SK-N-SH (cell line): ENCODE measurements at regions of chr17 and their contacts with region 1.

Region 1: GRCh38 chr17:79126139-79126538 is 51.5 kb downstream of the ENGASE start:
- DNase-seq: peak; percentile 87
- H3K4me3 ChIP-seq: no peak overlapping the region
- H3K27ac ChIP-seq: no peak overlapping the region
- H3K4me1 ChIP-seq: peaks cover 0 to 17% of the 10 kb centered on the region in 2 experiments; a peak in 1 of 4 replicates
- H3K27me3 ChIP-seq: peaks cover 68% of the 10 kb centered on the region
- CTCF ChIP-seq: peak; percentile 31
- EP300 ChIP-seq: no peak
- RAD21 ChIP-seq: peak; percentile 65

Region 2: DNA sequence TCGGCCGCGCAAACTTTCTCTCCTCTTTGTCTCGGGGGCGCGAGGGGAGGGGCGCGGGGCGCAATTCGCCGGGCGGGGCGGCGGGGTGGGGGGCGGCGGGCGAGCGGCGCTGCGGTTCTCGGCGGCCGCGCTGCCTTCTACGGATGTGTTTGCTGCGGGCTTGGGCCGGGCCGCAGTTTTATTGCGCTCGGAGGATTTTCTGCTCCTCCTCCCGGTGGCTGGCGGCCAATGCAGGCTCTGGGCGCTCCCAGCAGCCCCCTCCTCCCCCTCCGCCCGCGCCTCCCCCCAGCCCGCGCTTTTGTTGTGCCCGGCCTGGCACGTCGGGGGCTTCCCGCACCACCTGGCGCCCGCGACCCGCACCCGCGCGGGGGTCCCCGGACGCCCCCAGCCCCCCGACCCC is 200.9 kb before region 1 on chr17 and contains the start of gene TIMP2:
- CTCF ChIA-PET with region 1: no interaction called
- POLR2A ChIA-PET with region 1: no interaction called
- DNase-seq: peak; percentile 100
- H3K4me3 ChIP-seq: peak within 1 kb of the TSS; percentile 74 to 84
- H3K27ac ChIP-seq: peak within 1 kb of the TSS; percentile 74 to 93
- H3K4me1 ChIP-seq: peaks cover 18 to 46% of the 10 kb centered on the region in 2 experiments
- H3K27me3 ChIP-seq: no peaks in the 10 kb centered on the region
- CTCF ChIP-seq: no peak
- EP300 ChIP-seq: no peak
- RAD21 ChIP-seq: peak; percentile 14; the same call in 1 of the 2 replicates
- polyA plus RNA-seq, gene TIMP2: 256 and 441 TPM in 2 replicates

Region 3: GRCh38 chr17:79065105-79065670 is 61.0 kb before region 1 on chr17:
- CTCF ChIA-PET with region 1: no interaction called
- POLR2A ChIA-PET with region 1: no interaction called
- DNase-seq: no peak
- H3K4me3 ChIP-seq: no peak overlapping the region
- H3K27ac ChIP-seq: no peak overlapping the region
- H3K4me1 ChIP-seq: no peaks in the 10 kb centered on the region
- H3K27me3 ChIP-seq: no peaks in the 10 kb centered on the region; the same call in 1 of the 2 replicates
- CTCF ChIP-seq: peak; percentile 68
- EP300 ChIP-seq: no peak
- RAD21 ChIP-seq: peak; percentile 65

Region 4: DNA sequence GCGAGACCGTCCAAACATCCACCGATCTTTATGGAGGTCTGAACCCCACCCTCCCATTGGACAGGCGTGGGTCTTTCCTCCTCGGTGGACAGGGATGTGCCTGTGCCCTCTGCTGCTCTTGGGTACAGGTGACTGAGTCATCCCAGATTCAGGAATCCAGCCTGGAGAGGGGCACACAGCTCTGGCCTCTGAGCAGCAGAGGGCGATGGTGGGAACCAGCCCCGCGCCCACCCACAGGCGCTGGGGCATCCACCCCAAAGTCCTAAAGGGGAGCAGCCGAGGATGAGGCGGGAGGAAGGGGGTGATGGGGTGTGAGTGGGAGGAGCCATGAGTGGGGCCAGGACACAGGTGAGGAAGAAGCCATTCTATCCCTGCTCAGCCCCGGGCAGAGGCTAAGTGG is 16.6 kb before region 1 on chr17:
- CTCF ChIA-PET with region 1: interaction called, 42 read pairs
- POLR2A ChIA-PET with region 1: interaction called, 5 read pairs
- DNase-seq: peak; percentile 79
- H3K4me3 ChIP-seq: no peak overlapping the region
- H3K27ac ChIP-seq: no peak overlapping the region
- H3K4me1 ChIP-seq: peaks cover 0 to 15% of the 10 kb centered on the region in 2 experiments; a peak in 1 of 4 replicates
- H3K27me3 ChIP-seq: peaks cover 17% of the 10 kb centered on the region; the same call in 1 of the 2 replicates
- CTCF ChIP-seq: peak; percentile 48
- EP300 ChIP-seq: no peak
- RAD21 ChIP-seq: peak; percentile 51

Region 5: DNA sequence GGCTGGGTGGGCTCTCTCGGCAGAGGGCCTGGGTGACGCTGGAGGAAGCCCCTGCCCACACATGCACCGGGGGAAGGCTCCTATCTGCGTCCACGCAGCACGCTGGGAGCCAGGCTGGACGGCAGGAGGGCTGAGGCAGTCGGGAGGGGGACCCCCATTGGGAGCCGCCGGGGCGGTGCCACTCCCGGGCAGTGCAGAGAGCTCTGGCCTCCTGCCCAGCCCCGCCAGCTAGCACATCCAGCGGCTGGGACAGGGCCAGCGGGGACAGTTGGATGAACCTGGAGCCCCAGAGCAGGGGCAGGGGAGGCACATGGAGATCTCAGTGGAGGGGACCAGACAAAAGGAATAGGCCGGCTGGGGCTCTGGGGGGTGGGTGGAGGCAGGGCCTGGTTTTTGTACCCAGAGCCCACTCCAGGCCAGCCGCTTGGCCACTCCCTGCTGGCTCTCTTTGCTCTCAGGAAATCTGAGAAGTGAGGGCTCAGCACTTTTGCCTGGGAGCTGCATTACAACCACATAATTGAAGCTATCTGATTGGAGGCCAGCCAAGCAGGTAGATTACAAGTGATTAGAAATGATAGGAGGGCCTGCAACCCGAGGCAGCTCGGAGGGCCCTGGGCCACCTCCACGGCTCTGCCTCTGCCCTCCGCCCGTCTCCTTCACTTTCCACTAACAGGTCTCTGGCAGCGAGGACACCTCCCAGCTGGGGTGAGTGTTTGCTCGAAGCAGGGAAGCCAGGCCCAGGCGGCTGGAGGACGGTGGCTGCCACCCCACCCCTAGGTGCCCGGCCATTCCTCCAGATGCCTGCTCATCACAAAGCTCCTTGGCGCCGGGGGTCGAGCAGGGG is 11.5 kb before region 1 on chr17:
- CTCF ChIA-PET with region 1: interaction called, 42 read pairs
- POLR2A ChIA-PET with region 1: interaction called, 5 read pairs
- DNase-seq: peak; percentile 97
- H3K4me3 ChIP-seq: no peak overlapping the region; a peak in 1 of 4 replicates
- H3K27ac ChIP-seq: peak overlapping the region in 1 of 2 experiments; percentile 40; a peak in 1 of 4 replicates
- H3K4me1 ChIP-seq: peaks cover 0 to 27% of the 10 kb centered on the region in 2 experiments; a peak in 1 of 4 replicates
- H3K27me3 ChIP-seq: peaks cover 35% of the 10 kb centered on the region
- CTCF ChIP-seq: no peak
- EP300 ChIP-seq: peak in 1 of 2 experiments; percentile 59; a peak in 2 of 4 replicates
- RAD21 ChIP-seq: no peak; the same call in 1 of the 2 replicates

Region 6: GRCh38 chr17:79137015-79137788 is 11.1 kb after region 1 on chr17:
- CTCF ChIA-PET with region 1: interaction called, 10 read pairs
- POLR2A ChIA-PET with region 1: no interaction called
- DNase-seq: no peak
- H3K4me3 ChIP-seq: no peak overlapping the region
- H3K27ac ChIP-seq: no peak overlapping the region
- H3K4me1 ChIP-seq: peaks cover 0 to 23% of the 10 kb centered on the region in 2 experiments; a peak in 1 of 4 replicates
- H3K27me3 ChIP-seq: peaks cover 50% of the 10 kb centered on the region
- CTCF ChIP-seq: no peak
- EP300 ChIP-seq: no peak
- RAD21 ChIP-seq: no peak

Region 7: GRCh38 chr17:79160980-79161636 is 35.0 kb after region 1 on chr17:
- CTCF ChIA-PET with region 1: interaction called, 18 read pairs
- POLR2A ChIA-PET with region 1: no interaction called
- DNase-seq: no peak
- H3K4me3 ChIP-seq: no peak overlapping the region
- H3K27ac ChIP-seq: no peak overlapping the region
- H3K4me1 ChIP-seq: peaks cover 0 to 34% of the 10 kb centered on the region in 2 experiments; a peak in 2 of 4 replicates
- H3K27me3 ChIP-seq: peaks cover 39% of the 10 kb centered on the region
- CTCF ChIP-seq: no peak
- EP300 ChIP-seq: no peak
- RAD21 ChIP-seq: no peak